ENCODE measurements at regions of chr1 and their contacts with region 1.

Region 1: GRCh38 chr1:159798893-159799292 is 3.3 kb upstream of the FCRL6 start:
- DNase-seq: no peak
- H3K4me3 ChIP-seq: no peak overlapping the region
- H3K27ac ChIP-seq: no peak overlapping the region
- H3K4me1 ChIP-seq: no peaks in the 10 kb centered on the region
- H3K27me3 ChIP-seq: peaks cover 0 to 25% (median 0%) of the 10 kb centered on the region in 4 donors
- CTCF ChIP-seq: peak; percentile 72 to 73 (median 72)
- EP300 ChIP-seq: no peak
- POLR2A ChIP-seq: no peak

Region 2: DNA sequence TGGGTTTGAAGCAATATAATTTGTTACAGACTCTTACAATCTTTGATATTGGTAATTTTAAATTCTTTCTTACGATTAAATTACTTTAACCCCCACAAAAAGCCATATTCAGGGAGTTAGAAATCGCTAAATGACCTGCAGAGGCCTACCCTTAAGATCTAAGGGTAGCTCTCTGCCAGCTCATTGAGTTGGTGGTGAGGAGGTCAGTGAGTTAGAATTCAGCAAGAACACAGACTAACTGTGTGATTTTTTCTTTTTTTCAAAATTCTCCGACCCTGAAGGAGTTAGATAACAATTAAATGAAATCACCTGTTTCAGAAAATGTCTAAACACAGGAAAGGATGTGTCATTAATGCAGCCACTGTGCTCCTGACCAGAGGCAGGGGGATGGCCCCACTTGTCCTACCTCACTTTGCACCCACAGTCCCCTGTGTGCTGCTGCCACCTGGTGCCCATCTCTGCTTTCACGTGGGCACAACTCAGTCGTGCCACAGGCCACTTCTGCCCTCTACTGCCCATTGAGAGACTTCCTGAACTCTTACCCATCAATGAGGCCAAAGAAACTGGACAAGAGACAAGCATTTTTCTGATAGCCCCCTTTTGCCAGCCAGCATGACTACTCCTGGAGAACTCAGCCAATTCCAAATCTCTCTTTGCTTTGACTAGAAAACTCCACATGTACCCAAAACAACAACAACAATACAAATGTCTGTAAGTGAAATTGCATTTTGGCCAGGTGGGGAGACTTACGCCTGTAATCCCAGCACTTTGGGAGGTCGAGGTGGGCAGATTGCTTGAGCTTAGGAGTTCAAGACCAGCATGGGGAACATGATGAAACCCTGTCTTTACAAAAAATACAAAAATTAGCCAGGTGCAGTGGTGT is 92.6 kb after region 1 on chr1:
- intact Hi-C with region 1: loop called (anchors 1 kb)
- DNase-seq: peak; percentile 94
- H3K4me3 ChIP-seq: no peak overlapping the region
- H3K27ac ChIP-seq: no peak overlapping the region
- H3K4me1 ChIP-seq: peaks cover 15 to 26% (median 18%) of the 10 kb centered on the region in 4 donors
- H3K27me3 ChIP-seq: no peaks in the 10 kb centered on the region
- CTCF ChIP-seq: peak; percentile 93 to 98 (median 95)
- EP300 ChIP-seq: no peak
- POLR2A ChIP-seq: no peak

Region 3: GRCh38 chr1:160006312-160006940 is 207.5 kb after region 1 on chr1:
- intact Hi-C with region 1: loop called (anchors 5 kb)
- DNase-seq: no peak
- H3K4me3 ChIP-seq: no peak overlapping the region
- H3K27ac ChIP-seq: no peak overlapping the region
- H3K4me1 ChIP-seq: no peaks in the 10 kb centered on the region
- H3K27me3 ChIP-seq: peaks cover 0 to 10% (median 0%) of the 10 kb centered on the region in 4 donors
- CTCF ChIP-seq: peak; percentile 66 to 82 (median 69)
- EP300 ChIP-seq: no peak
- POLR2A ChIP-seq: no peak